CD4-positive, alpha-beta T cell (primary cell): ENCODE measurements at regions of chr12 and their contacts with region 1.

Region 1: GRCh38 chr12:11171145-11171968 is at the start of gene SMIM10L1:
- DNase-seq: peak; percentile 78 to 96 (median 84)
- ATAC-seq: peak; percentile 91
- H3K4me3 ChIP-seq: peak within 1 kb of the TSS; percentile 71
- H3K4me3 Mint-ChIP-seq: peak within 1 kb of the TSS; percentile 99
- H3K27ac ChIP-seq: peak within 1 kb of the TSS; percentile 79 to 82
- H3K27ac Mint-ChIP-seq: peak within 1 kb of the TSS; percentile 96
- H3K4me1 ChIP-seq: peaks cover 17% of the 10 kb centered on the region
- H3K4me1 Mint-ChIP-seq: peaks cover 75% of the 10 kb centered on the region
- H3K27me3 ChIP-seq: no peaks in the 10 kb centered on the region
- H3K27me3 Mint-ChIP-seq: no peaks in the 10 kb centered on the region
- CTCF ChIP-seq: peak; percentile 12
- total RNA-seq, gene SMIM10L1: 9.0 to 9.6 TPM

Region 2: DNA sequence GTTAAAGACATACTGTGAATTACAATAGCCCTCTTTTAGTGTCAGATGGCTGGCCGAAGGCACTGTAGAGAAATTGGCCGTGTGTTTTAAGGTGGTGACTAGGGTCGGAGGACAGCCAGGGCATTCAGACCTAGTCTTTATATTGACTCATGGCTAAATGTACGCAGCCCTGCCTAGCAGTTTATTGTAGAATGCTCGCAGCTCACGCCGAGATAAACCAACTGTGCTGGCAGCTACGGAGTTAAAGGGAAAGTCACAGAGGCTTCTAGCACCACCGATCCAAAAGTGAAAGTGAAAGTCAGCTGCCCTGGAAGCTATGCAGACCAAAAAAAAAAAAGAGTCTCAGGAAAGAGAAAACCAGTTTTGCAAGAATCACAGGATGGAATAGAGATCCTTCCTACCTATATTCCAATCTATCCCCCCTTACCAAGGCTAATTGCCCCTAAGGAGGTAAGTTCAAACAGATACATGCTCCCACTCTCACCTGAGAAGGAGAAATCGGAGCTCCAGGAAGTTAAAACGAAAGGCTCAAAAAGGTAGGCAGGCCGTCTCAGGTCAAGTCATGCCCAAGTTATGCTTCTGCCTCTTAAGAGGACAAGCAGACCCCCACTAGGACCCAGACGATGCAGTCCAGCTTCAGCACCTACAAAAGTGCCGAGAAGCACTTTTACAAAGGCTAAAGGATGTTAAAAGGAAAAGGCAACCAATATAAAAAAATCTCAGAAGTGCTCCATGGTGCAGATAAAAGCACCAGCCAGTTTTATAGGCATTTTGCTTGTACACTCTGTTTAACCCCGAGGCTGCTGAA is 806.3 kb before region 1 on chr12:
- CTCF ChIA-PET with region 1: no interaction called
- POLR2A ChIA-PET with region 1: interaction called, 19 read pairs
- intact Hi-C with region 1: loop called in 1 of 2 experiments (anchors 5 kb)
- DNase-seq: peak; percentile 23 to 87 (median 48)
- ATAC-seq: peak; percentile 81
- H3K4me3 ChIP-seq: peak overlapping the region; percentile 73
- H3K4me3 Mint-ChIP-seq: no peak overlapping the region
- H3K27ac ChIP-seq: peak overlapping the region; percentile 52 to 77
- H3K27ac Mint-ChIP-seq: no peak overlapping the region
- H3K4me1 ChIP-seq: peaks cover 18% of the 10 kb centered on the region
- H3K4me1 Mint-ChIP-seq: peaks cover 12% of the 10 kb centered on the region
- H3K27me3 ChIP-seq: no peaks in the 10 kb centered on the region
- H3K27me3 Mint-ChIP-seq: no peaks in the 10 kb centered on the region
- CTCF ChIP-seq: no peak

Region 3: DNA sequence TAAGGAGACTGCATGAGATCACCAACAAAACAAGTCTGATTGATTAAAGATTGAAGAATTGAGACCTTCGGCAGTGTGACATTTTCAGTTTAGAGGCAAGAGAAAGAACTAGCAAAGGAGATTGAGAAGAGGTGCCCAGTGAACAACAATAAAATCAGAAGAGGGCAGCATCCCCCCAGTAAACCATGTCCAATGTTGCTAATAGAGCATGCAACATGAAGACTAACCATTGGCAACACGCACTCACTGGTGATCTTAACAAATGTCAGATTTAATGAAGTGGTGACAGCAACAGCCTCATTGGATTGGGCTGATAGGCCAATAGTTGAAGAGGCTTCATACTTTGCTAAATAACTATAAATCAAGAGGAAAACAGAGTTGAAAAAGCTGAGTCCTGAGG is 211.6 kb before region 1 on chr12:
- CTCF ChIA-PET with region 1: no interaction called
- POLR2A ChIA-PET with region 1: interaction called, 4 read pairs
- intact Hi-C with region 1: loop called in 1 of 2 experiments (anchors 5 kb)
- DNase-seq: peak in 3 of 14 experiments; percentile 23 to 29 (median 27)
- ATAC-seq: peak; percentile 13
- H3K4me3 ChIP-seq: no peak overlapping the region
- H3K4me3 Mint-ChIP-seq: no peak overlapping the region
- H3K27ac ChIP-seq: no peak overlapping the region
- H3K27ac Mint-ChIP-seq: peak overlapping the region; percentile 37
- H3K4me1 ChIP-seq: peaks cover 10% of the 10 kb centered on the region
- H3K4me1 Mint-ChIP-seq: peaks cover 46% of the 10 kb centered on the region
- H3K27me3 ChIP-seq: no peaks in the 10 kb centered on the region
- H3K27me3 Mint-ChIP-seq: no peaks in the 10 kb centered on the region
- CTCF ChIP-seq: no peak

Region 4: GRCh38 chr12:11026121-11026520 is 145.2 kb before region 1 on chr12:
- CTCF ChIA-PET with region 1: no interaction called
- POLR2A ChIA-PET with region 1: no interaction called
- intact Hi-C with region 1: no loop called
- DNase-seq: no peak
- ATAC-seq: no peak
- H3K4me3 ChIP-seq: no peak overlapping the region
- H3K4me3 Mint-ChIP-seq: no peak overlapping the region
- H3K27ac ChIP-seq: no peak overlapping the region
- H3K27ac Mint-ChIP-seq: no peak overlapping the region
- H3K4me1 ChIP-seq: no peaks in the 10 kb centered on the region
- H3K4me1 Mint-ChIP-seq: peaks cover 7% of the 10 kb centered on the region
- H3K27me3 ChIP-seq: no peaks in the 10 kb centered on the region
- H3K27me3 Mint-ChIP-seq: no peaks in the 10 kb centered on the region
- CTCF ChIP-seq: no peak

Region 5: GRCh38 chr12:11144297-11144696 is 27.1 kb before region 1 on chr12:
- CTCF ChIA-PET with region 1: no interaction called
- POLR2A ChIA-PET with region 1: interaction called, 10 read pairs
- intact Hi-C with region 1: no loop called
- DNase-seq: no peak
- ATAC-seq: no peak
- H3K4me3 ChIP-seq: no peak overlapping the region
- H3K4me3 Mint-ChIP-seq: no peak overlapping the region
- H3K27ac ChIP-seq: no peak overlapping the region
- H3K27ac Mint-ChIP-seq: no peak overlapping the region
- H3K4me1 ChIP-seq: no peaks in the 10 kb centered on the region
- H3K4me1 Mint-ChIP-seq: peaks cover 36% of the 10 kb centered on the region
- H3K27me3 ChIP-seq: no peaks in the 10 kb centered on the region
- H3K27me3 Mint-ChIP-seq: no peaks in the 10 kb centered on the region
- CTCF ChIP-seq: no peak

Region 6: DNA sequence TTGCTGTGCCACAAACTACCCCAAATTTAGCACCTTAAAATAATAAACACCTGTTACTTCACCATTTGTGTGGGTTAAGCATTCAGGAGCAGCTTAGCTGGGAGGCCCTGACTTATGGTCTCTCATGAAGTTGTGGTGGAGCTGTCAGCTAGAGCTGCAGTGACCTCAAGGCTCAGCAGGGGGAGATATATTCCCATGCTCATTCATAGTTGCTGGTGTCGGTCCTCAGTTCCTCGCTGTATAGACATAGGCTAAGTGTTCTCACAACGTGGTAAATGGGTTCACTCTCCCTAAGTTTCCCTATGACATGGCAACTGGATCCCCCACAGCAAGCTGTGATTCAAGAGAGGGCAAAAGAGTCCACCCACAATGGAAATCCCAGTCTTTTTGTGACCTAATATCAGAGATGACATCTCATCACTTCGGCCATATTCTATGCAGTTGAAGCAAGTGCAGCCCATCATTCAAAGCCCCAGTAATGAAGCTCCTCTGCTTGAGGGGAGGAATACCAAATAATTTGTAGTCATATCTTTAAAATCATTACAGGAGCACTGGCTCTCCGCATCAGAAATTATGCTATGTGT is 57.0 kb after region 1 on chr12:
- CTCF ChIA-PET with region 1: no interaction called
- POLR2A ChIA-PET with region 1: no interaction called
- intact Hi-C with region 1: no loop called
- DNase-seq: peak in 6 of 14 experiments; percentile 1 to 56 (median 18)
- ATAC-seq: no peak
- H3K4me3 ChIP-seq: no peak overlapping the region
- H3K4me3 Mint-ChIP-seq: no peak overlapping the region
- H3K27ac ChIP-seq: no peak overlapping the region
- H3K27ac Mint-ChIP-seq: no peak overlapping the region
- H3K4me1 ChIP-seq: no peaks in the 10 kb centered on the region
- H3K4me1 Mint-ChIP-seq: no peaks in the 10 kb centered on the region
- H3K27me3 ChIP-seq: no peaks in the 10 kb centered on the region
- H3K27me3 Mint-ChIP-seq: no peaks in the 10 kb centered on the region
- CTCF ChIP-seq: peak; percentile 21

Region 7: DNA sequence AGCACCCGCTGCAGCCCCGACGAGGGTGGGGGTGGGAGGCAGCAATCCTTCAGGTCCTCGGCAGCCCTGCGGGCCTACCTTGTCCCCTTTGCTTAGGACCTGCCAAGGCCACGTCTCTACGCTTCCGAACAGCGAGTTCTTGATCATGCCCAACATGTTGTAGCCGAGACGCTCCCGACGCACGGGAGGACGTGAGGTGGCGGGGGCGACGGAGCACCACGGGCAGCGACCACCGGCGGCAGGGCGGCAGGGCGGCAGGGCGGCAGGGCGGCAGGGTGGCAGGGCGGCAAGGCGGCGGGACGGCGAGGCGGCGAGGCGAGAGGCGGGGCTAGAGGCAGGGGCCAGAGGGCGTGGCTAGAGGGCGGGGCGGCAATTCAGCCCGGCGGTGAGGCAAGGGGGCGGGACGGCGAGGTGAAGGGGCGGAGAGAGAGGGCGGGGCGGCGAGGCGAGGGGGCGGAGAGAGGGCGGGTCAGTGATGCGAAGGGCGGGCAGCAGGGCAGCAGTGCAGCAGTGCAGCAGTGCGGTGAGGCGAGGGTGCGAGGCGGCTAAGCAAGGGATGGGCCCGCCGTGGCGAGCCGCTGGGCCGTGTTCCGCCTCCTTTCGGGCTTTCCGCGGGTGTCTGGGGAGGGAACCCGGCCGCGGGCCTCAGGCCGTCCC is 1828.7 kb after region 1 on chr12 and contains the start of gene HEBP1:
- CTCF ChIA-PET with region 1: no interaction called
- POLR2A ChIA-PET with region 1: no interaction called
- intact Hi-C with region 1: loop called in 1 of 2 experiments (anchors 10 kb)
- DNase-seq: peak; percentile 92 to 98 (median 96)
- ATAC-seq: peak; percentile 87
- H3K4me3 ChIP-seq: peak within 1 kb of the TSS; percentile 95
- H3K4me3 Mint-ChIP-seq: peak within 1 kb of the TSS; percentile 93
- H3K27ac ChIP-seq: peak within 1 kb of the TSS; percentile 32 to 45
- H3K27ac Mint-ChIP-seq: peak within 1 kb of the TSS; percentile 89
- H3K4me1 ChIP-seq: peaks cover 29% of the 10 kb centered on the region
- H3K4me1 Mint-ChIP-seq: peaks cover 42% of the 10 kb centered on the region
- H3K27me3 ChIP-seq: peaks cover 0 to 3% of the 10 kb centered on the region in 2 experiments
- H3K27me3 Mint-ChIP-seq: no peaks in the 10 kb centered on the region
- CTCF ChIP-seq: no peak
- total RNA-seq, gene HEBP1: 11.9 to 12.5 TPM